Activated naive CD4-positive, alpha-beta T cell treated with anti-CD3 and anti-CD28 coated beads for 36 hours (primary cell): ENCODE measurements at regions of chr1 and their contacts with region 1.

Region 1: DNA sequence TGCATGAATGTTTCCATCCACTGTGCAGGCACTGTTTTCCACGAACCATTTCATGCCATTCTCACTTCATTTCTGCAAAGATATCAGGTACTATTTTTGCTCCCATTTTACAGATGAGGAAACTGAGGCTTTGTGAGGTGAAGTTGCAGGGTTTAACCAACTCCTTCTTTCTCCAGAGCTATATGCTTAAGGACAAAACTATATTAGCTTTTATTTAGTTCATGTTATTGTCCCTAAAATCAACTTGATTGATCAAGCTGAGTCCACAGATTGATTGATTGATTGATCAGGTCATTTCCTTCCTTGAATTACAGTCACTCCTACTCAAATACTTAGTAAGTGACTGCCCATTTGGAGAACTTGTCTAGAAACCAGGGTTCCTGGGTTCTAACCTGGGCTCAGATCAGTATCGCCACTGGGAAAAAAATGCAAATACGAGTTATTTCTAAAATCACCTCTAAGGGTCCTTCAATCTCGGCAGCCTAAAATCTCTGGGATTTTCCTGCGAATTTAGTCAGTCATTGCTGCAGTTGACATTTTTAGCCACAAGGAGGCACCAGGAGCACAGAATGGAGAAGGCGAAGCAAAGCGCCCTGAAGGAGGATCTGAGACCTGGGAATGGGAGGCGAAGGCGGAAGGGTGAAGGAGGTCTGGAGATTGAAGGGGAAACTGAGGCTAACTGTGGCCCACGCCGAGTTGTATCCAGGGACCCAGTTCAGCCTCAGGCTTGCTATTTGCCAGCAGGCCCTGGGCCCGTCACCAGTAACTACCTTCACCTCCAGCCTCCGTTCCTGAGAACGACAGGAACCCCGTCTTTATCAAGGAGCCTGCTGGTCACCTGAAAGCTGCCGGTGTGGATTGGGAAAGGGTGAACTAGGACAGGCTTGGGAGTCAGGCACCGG is 14.3 kb upstream of the MUL1 start:
- DNase-seq: peak; percentile 84
- H3K4me3 Mint-ChIP-seq: no peak overlapping the region
- H3K27ac Mint-ChIP-seq: no peak overlapping the region
- H3K4me1 Mint-ChIP-seq: no peaks in the 10 kb centered on the region
- H3K27me3 Mint-ChIP-seq: peaks cover 3% of the 10 kb centered on the region

Region 2: DNA sequence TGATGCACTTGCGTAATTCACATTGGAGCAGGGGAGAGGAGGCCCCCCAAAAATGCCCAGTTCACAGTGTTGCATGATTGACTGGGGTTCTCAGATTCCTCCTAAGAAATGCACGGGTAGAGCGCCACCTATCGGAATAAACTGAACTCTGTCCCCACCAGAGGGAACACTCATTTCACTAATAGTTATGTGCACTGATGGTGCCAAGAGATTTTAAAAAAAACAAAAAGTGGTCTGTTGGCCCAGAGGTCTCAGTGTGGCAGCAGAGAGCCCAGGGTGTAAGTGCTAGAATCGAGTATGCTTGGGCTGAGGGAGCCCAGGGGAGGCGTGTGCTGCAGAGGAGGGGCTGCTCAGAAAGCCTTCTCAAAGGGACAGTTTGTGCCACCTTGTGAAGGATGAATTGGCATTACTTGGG is 118.0 kb after region 1 on chr1:
- CTCF ChIA-PET with region 1: interaction called, 28 read pairs
- intact Hi-C with region 1: loop called (anchors 1 kb)
- DNase-seq: peak; percentile 80
- H3K4me3 Mint-ChIP-seq: no peak overlapping the region
- H3K27ac Mint-ChIP-seq: no peak overlapping the region
- H3K4me1 Mint-ChIP-seq: peaks cover 2% of the 10 kb centered on the region
- H3K27me3 Mint-ChIP-seq: no peaks in the 10 kb centered on the region

Region 3: DNA sequence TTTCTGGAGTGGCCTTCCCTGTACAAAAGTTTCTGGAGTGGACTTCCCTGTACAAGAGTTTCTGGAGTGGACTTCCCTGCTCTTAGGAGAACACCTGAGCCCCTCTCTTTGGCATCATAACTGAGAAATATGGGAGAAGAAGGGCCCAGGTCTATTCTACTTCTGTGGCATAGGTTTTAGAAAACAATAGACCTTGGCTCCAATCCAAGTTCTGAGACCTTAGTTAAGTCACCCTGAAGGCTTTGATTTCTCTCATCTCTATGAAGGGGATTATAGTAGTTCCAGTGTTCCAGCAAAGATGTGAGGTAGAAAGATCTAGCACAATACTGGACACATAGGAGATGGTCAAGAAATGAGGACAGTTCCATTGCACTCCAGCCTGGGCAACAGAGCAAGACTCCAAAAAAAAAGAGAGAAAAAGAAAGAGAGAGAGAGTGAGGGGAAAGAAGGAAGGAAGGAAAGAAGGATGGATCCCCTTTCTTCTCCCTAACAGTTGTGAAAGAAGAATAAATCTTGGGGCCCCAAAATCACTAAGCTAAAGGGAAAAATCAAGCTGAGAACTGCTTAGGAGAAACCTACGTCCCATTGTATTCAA is 667.8 kb after region 1 on chr1:
- CTCF ChIA-PET with region 1: no interaction called
- intact Hi-C with region 1: loop called (anchors 10 kb)
- DNase-seq: no peak
- H3K4me3 Mint-ChIP-seq: no peak overlapping the region
- H3K27ac Mint-ChIP-seq: no peak overlapping the region
- H3K4me1 Mint-ChIP-seq: peaks cover under 1% of the 10 kb centered on the region
- H3K27me3 Mint-ChIP-seq: peaks cover under 1% of the 10 kb centered on the region